Posterior cingulate gyrus (tissue), 11 donors: ENCODE measurements at regions of chr17 and their contacts with region 1.

Region 1: DNA sequence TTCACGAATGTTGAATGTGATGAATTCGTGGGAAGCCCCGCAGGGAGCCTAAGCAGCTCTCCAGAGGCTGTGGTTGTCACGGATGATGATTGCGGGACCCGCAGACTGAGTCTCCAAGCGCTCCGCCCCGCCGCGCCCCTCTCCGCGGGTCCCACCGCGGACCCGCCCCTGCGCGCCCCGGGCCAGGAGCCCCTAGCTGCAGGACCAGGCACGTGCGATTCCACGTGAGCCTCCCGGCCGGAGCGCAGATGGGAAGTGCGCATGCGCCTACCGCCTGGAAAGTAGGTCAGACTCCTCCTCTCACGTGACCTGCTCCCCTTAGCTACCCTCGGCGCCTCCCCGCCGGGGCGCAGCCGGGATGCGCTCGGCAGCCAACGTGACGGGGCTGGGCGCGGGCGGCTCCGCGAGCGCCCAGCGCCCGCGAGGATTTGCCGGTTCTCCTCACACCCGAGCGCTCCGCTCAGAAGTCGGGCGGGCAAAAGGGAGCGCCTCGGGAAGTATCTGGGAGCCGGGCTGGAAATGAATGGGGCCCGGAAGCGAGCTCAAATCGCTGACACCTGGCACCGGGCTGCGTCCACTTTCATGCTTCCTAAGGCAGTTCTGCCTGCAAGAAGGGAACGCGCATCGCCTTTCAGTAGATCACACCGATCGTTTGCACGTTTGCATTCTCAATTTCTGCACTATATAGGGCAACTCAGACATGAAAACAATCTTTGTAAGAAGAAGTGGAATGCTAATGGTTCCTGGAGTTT is 26.4 kb upstream of the HLF start:
- DNase-seq: peak; percentile 90 to 99 (median 94)

Region 2: DNA sequence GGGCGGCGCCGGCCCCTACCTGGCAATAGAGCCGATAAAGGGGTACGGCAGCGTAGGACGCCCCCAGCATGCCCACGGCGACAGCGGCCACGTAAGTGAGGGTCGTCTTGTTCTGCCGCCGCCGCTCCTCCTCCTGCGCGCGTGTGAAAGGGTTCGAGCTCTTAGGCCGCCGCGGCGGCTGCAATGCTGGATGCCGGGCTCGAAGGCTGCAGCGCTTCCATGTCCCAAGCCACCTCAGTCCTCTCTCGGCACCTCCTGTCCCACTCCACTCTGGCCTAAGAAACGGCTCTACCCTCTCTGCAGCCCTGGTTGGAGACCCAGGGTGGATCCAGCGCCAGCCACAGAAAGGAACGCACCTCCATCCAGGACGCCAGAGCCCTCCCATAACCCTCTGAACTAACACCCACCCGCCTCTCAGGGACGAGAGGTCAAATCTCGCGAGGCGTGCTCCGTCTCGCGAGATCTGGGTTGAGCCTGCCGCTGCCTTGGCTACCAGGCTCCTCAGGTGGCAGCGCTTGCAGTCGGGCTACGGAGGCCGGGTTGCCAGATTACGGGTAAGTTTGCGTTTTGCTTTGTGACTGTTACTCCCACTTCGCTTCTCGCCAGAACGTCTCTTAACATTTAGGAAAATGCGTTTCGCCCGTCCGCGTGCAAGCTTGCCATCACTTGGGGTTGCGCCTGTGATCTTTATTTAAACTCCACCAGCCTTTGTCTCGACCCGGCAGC is 269.9 kb before region 1 on chr17 and contains the starts of genes COX11 and STXBP4:
- intact Hi-C with region 1: loop called (anchors 5 kb)
- DNase-seq: peak; percentile 87 to 99 (median 96)

Region 3: DNA sequence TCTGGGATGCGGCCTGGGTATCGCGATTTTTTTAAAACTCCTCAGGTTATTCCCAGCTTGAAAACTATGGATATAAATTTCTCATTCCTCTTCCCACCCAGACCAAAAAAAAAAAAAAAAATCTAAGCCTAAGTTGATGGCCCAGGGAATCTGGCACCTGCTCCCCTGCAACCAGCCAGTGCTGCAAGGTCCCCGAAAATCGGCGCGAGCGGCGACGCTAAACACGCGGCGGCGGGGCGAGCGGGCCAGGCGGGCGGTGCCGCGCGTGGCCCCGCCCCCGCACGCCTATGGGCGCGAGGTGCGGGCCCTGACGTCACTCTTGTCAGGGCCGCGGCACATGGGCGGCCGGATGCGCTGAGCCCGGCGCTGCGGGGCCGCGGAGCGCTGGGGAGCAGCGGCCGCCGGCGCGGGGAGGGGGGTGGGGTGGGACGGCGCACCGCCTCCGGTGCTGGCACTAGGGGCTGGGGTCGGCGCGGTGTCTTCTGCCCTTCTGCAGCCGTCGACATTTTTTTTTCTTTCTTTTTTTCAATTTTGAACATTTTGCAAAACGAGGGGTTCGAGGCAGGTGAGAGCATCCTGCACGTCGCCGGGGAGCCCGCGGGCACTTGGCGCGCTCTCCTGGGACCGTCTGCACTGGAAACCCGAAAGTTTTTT is 26.4 kb after region 1 on chr17 and contains the start of gene HLF:
- intact Hi-C with region 1: loop called (anchors 1 kb)
- DNase-seq: peak; percentile 65 to 98 (median 83)